PC-3 (cell line): ENCODE measurements at regions of chr11 and their contacts with region 1.

Region 1: GRCh38 chr11:121591405-121592033 is 138.8 kb upstream of the SORL1-AS1 start:
- DNase-seq: peak; percentile 95
- ATAC-seq: peak; percentile 35
- H3K4me3 ChIP-seq: no peak overlapping the region
- H3K27ac ChIP-seq: no peak overlapping the region
- H3K4me1 ChIP-seq: peaks cover 35% of the 10 kb centered on the region
- H3K27me3 ChIP-seq: no peaks in the 10 kb centered on the region
- CTCF ChIP-seq: peak; percentile 94

Region 2: DNA sequence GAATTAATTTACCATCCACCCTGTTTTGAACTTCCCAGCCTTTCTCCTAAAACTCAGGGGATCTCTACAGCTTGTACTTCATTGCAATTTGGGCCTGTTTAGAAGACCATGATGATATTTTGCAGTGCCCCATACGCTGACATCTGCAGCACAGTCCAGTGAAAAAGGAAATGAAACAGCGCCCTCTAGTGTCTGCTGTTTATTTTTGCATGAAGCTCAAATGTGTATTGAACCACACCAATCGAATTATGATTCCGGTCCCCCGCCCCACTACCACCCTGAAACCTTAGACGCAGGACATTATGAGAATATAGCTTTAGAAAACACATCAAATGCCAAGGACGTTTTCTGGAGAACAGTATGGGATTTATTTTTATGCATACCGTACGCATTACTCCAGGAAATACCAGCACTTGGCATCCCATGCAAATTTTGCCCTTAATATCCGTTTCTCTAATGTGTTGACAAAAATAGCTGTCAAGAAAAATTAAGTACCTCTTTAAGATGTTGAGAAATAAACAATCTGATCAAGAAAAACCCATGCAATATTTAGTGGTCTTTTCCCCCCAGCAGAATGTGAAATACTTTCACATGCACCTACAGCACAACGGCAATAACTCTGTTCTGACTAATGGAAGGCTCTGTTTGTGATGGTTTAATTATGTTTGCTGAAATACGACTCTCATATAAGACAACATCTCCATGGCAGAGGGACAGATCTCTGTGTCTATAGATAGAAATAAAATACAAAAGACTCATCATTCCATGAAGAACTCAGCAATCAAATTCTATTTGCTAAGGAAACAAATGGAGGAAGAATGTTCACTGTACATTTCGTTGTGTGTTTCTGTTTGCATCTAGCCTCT is 396.6 kb before region 1 on chr11:
- CTCF ChIA-PET with region 1: no interaction called
- POLR2A ChIA-PET with region 1: no interaction called
- intact Hi-C with region 1: loop called (anchors 5 kb)
- DNase-seq: peak; percentile 91
- ATAC-seq: peak; percentile 97
- H3K4me3 ChIP-seq: peak overlapping the region; percentile 49
- H3K27ac ChIP-seq: no peak overlapping the region
- H3K4me1 ChIP-seq: peaks cover 6% of the 10 kb centered on the region; the same call in 1 of the 2 replicates
- H3K27me3 ChIP-seq: peaks cover 28% of the 10 kb centered on the region
- CTCF ChIP-seq: peak; percentile 96

Region 3: DNA sequence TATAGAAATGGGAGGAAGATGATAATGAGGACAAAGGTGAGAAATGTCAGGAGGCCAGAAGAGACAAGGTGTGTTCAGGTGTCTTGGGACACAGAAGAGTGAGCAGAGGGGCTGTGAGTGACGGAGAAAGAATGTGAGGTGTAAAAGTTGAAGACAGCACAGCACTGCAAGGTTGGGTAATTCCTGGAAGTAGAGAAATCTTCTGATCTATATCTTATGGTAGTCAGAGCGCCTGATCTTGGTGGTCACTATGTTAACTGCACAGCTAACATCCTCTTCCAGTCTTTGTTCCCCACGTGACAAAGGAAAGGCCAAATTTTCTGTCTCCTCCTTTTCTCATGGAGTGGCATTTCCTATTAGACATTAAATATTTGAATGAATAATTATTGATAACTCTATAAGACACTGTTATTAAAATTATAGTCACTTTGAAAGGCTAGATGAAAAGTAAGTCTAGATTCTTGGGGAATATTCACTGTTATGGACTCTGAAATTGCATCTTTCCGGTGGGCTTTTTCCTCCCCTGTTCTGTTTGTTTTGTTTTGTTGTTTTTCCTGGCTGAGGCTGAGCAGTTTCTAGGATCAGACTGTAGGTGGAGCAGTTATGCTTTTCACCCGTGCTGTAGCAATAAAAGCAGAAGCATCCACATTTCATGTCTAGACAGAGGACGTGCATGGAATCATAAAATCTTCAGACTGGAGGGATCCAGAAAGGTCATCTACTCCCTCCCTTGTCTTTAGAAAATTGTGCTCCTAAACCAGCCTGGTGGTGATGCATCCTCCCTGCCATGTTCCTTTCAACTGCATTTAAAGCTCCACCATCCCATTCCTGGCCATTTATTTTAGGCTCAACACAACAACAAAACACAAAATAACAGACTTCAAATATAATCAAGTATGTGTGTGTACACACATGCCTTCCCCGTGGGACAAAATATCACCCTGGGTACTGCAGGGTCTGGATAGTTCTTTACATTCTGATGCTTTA is 272.4 kb before region 1 on chr11:
- CTCF ChIA-PET with region 1: interaction called, 4 read pairs
- POLR2A ChIA-PET with region 1: no interaction called
- intact Hi-C with region 1: loop called (anchors 1 kb)
- DNase-seq: peak; percentile 74
- ATAC-seq: peak; percentile 66
- H3K4me3 ChIP-seq: no peak overlapping the region
- H3K27ac ChIP-seq: no peak overlapping the region
- H3K4me1 ChIP-seq: no peaks in the 10 kb centered on the region
- H3K27me3 ChIP-seq: no peaks in the 10 kb centered on the region
- CTCF ChIP-seq: peak; percentile 96

Region 4: GRCh38 chr11:121451986-121452608 is 139.4 kb before region 1 on chr11 and contains the start of gene SORL1:
- CTCF ChIA-PET with region 1: interaction called, 3 read pairs
- POLR2A ChIA-PET with region 1: no interaction called
- intact Hi-C with region 1: loop called (anchors 1 kb)
- DNase-seq: peak; percentile 90
- ATAC-seq: peak; percentile 82
- H3K4me3 ChIP-seq: peak within 1 kb of the TSS; percentile 89
- H3K27ac ChIP-seq: peak within 1 kb of the TSS; percentile 65
- H3K4me1 ChIP-seq: peaks cover 39% of the 10 kb centered on the region
- H3K27me3 ChIP-seq: no peaks in the 10 kb centered on the region
- CTCF ChIP-seq: peak; percentile 68
- total RNA-seq, gene SORL1: 53.7 and 74.5 TPM in 2 replicates

Region 5: DNA sequence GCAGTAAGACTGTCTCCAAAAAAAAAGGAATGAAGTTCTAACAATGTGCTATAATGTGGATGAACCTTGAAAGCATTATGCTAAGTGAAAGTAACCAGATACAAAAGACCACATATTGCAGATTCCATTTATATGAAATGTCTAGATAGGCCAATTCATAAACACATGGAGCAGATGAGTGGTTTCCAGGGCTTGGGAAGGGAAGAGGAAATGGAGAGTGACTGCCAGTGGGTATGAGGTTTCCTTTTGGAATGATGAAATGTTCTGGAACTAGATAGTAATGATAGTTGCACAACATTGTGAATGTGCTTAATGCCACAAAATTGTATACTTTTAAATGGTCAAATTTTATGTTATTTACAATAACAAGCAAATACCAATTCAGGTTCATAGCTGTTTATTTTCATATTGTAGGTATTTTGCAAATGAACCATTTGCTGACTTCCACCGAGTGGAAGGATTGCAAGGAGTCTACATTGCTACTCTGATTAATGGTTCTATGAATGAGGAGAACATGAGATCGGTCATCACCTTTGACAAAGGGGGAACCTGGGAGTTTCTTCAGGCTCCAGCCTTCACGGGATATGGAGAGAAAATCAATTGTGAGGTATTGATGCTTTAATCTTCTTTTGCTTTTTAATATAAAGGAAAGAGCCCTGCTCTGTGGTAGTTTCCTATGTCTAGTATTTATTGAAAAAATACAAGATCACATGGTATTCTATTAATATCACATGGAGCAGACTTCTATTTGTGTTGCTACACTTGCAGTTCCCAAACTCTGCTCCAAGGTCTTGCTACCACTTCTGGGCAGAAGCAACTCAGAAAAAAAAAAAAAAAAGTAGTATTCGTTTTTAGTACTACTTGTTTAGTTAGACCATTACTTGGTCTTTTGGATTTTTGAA is 71.0 kb before region 1 on chr11:
- CTCF ChIA-PET with region 1: no interaction called
- POLR2A ChIA-PET with region 1: no interaction called
- intact Hi-C with region 1: no loop called
- DNase-seq: peak; percentile 30
- ATAC-seq: no peak
- H3K4me3 ChIP-seq: no peak overlapping the region
- H3K27ac ChIP-seq: no peak overlapping the region
- H3K4me1 ChIP-seq: peaks cover 21% of the 10 kb centered on the region
- H3K27me3 ChIP-seq: no peaks in the 10 kb centered on the region
- CTCF ChIP-seq: no peak

Region 6: GRCh38 chr11:121613724-121614123 is 22.2 kb after region 1 on chr11:
- CTCF ChIA-PET with region 1: no interaction called
- POLR2A ChIA-PET with region 1: no interaction called
- intact Hi-C with region 1: loop called (anchors 2 kb)
- DNase-seq: no peak
- ATAC-seq: peak; percentile 5; the same call in 1 of the 2 replicates
- H3K4me3 ChIP-seq: no peak overlapping the region
- H3K27ac ChIP-seq: no peak overlapping the region
- H3K4me1 ChIP-seq: peaks cover 27% of the 10 kb centered on the region
- H3K27me3 ChIP-seq: no peaks in the 10 kb centered on the region
- CTCF ChIP-seq: no peak

Region 7: DNA sequence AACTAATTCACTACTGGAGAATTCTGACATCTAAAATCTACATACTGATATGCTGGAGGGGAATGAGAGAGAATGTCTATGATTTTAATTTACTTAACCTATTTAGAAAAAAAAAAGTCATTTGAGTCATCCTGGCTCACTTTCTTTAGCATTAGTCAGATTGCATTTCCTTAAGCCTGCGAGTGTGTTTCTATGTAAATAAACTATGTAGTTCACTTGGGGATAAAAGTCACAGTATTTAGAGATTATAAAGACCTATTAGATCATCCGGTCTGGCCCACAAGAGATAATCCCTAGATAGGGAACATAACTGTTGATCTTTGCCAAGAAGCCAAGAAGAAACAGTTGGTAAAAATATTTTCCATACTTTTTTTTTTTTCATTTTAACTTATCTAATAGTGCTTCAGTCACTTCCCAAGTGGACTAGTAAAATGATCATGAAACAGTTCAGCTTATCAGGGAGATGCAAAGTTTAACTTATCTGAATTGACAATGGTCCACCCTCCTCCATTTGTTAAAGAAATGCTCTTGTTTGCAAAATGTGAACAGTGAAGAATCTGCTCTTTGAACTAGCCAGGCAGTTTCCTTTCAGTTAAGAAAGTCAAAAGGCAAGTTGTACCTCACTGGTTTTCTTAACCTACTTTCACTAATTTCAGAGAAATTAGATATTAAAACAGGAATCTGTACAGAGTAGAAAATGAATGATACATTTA is 545.7 kb after region 1 on chr11:
- CTCF ChIA-PET with region 1: no interaction called
- POLR2A ChIA-PET with region 1: no interaction called
- intact Hi-C with region 1: loop called (anchors 1 kb)
- DNase-seq: peak; percentile 96
- ATAC-seq: peak; percentile 47
- H3K4me3 ChIP-seq: no peak overlapping the region
- H3K27ac ChIP-seq: peak overlapping the region; percentile 78
- H3K4me1 ChIP-seq: peaks cover 81% of the 10 kb centered on the region
- H3K27me3 ChIP-seq: no peaks in the 10 kb centered on the region
- CTCF ChIP-seq: no peak